CD8-positive, alpha-beta memory T cell (primary cell): ENCODE measurements at regions of chr15 and their contacts with region 1.

Region 1: DNA sequence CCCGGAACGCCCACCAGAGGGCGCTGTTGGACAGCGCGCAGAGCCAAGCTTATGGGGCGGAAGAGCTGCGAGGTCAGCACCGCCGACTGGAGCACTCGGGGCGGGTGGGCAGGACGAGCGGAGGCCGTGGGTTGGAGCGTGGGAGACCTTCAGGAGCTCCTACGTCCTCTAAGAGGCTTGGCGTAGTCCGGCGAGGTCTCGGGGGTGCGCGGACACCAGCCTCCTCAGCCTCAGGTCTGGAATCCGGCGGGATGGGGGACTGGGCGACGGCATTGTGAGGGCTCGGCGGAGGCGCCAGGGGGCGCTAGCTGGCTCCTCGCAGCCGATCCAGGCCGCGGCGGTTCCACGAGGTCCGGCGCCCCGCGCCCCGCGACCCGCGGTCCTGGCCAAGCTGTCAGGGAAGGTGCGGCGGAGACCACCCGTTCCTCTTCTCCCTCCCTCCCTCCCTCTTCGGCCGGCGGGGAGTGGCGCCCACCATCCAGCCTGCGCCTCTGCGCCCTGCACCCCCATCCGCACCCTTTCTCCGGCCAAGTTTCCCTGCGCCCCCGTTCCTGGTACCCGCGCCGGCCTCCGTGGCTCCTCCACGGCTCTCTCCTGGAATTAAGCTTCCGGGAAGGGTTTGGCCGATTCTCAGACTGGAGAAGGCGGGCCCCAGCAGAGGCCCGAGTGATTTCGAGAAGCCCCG is 24.3 kb upstream of the POLG start:
- DNase-seq: peak; percentile 65 to 84 (median 77)
- H3K4me3 ChIP-seq: peak overlapping the region; percentile 45
- H3K4me3 Mint-ChIP-seq: peak overlapping the region; percentile 70 to 89 (median 83)
- H3K27ac ChIP-seq: no peak overlapping the region
- H3K27ac Mint-ChIP-seq: peak overlapping the region in 2 of 8 donors; percentile 19 to 46
- H3K4me1 ChIP-seq: peaks cover 15% of the 10 kb centered on the region
- H3K4me1 Mint-ChIP-seq: peaks cover 10 to 35% (median 16%) of the 10 kb centered on the region in 3 donors
- H3K27me3 ChIP-seq: peaks cover 64% of the 10 kb centered on the region
- H3K27me3 Mint-ChIP-seq: peaks cover 74 to 79% of the 10 kb centered on the region in 2 donors

Region 2: DNA sequence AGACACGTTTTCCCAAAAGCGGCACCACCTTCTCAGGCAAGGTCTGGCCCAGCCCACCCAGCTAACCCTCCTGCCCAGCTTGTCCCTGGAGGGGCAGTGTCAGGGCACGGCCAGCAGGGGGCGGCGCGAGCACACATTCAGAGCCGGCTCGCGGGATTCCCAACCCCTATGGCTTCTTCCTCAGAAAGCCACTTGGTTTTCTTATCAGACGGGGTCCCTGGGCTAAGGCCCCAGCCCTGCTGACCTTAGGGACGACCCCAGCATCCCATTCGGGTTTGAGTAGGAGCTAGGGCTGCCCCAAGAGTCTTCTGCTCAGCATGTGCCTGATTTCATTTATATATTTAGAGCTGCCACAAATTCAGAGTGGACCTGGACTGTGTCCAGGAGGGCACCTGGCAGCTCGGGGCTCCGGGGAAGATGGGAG is 152.0 kb before region 1 on chr15:
- CTCF ChIA-PET with region 1: interaction called, 16 read pairs
- POLR2A ChIA-PET with region 1: no interaction called
- DNase-seq: peak; percentile 47 to 76 (median 57)
- H3K4me3 ChIP-seq: no peak overlapping the region
- H3K4me3 Mint-ChIP-seq: peak overlapping the region in 3 of 7 donors; percentile 1 to 28 (median 10)
- H3K27ac ChIP-seq: no peak overlapping the region
- H3K27ac Mint-ChIP-seq: peak overlapping the region in 2 of 8 donors; percentile 47 to 52
- H3K4me1 ChIP-seq: no peaks in the 10 kb centered on the region
- H3K4me1 Mint-ChIP-seq: peaks cover 30 to 36% (median 35%) of the 10 kb centered on the region in 3 donors
- H3K27me3 ChIP-seq: no peaks in the 10 kb centered on the region
- H3K27me3 Mint-ChIP-seq: peaks cover 0 to 4% of the 10 kb centered on the region in 2 donors

Region 3: DNA sequence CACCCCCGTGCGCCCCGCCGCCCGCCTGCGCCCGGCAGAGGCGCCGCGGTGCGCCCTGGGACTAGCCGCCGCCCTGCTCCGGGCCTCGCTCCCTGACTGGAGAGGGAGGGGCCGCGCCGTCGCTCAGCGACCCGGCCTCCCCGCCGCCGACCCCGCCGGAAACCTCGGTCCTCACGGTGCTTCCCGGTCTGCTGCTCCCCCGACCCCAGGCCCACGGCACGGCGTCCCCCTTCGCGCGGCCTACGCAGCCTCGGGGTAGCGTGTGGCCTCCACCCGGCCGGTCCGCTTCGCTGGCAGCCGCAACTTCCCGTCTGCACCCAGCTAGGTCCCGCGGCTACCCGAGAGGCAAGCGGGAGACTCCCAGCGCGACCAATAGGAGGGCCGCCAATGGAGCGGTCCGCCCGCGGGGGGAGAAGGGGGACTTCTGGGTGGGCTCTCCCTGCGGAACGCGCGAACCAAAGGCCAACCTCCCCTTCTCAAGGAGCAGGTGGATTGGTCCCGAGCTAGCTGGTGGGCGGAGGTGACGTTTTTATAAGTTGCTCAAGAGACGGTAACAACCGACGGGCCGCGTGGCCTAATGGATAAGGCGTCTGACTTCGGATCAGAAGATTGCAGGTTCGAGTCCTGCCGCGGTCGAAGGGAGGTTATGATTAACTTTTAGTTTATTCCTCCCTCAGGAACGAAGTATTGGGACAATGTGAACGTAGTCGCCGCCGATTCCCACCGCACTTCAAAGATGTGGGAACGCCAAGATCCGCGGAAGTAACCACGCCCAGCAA is 24.2 kb before region 1 on chr15 and contains the start of gene POLG:
- CTCF ChIA-PET with region 1: interaction called, 58 read pairs
- POLR2A ChIA-PET with region 1: no interaction called
- DNase-seq: peak; percentile 97 to 100 (median 99)
- H3K4me3 ChIP-seq: peak within 1 kb of the TSS; percentile 89
- H3K4me3 Mint-ChIP-seq: peak within 1 kb of the TSS; percentile 92 to 96 (median 94)
- H3K27ac ChIP-seq: peak within 1 kb of the TSS; percentile 82
- H3K27ac Mint-ChIP-seq: peak within 1 kb of the TSS; percentile 88 to 100 (median 97)
- H3K4me1 ChIP-seq: peaks cover 42% of the 10 kb centered on the region
- H3K4me1 Mint-ChIP-seq: peaks cover 50 to 55% (median 52%) of the 10 kb centered on the region in 3 donors
- H3K27me3 ChIP-seq: no peaks in the 10 kb centered on the region
- H3K27me3 Mint-ChIP-seq: peaks cover 4 to 10% of the 10 kb centered on the region in 2 donors
- total RNA-seq, gene POLG: 106 to 110 TPM

Region 4: GRCh38 chr15:89378296-89379151 is 19.6 kb after region 1 on chr15:
- CTCF ChIA-PET with region 1: interaction called, 32 read pairs
- POLR2A ChIA-PET with region 1: no interaction called
- DNase-seq: peak in 2 of 5 donors; percentile 30 to 48
- H3K4me3 ChIP-seq: peak overlapping the region; percentile 41
- H3K4me3 Mint-ChIP-seq: peak overlapping the region; percentile 68 to 91 (median 82)
- H3K27ac ChIP-seq: no peak overlapping the region
- H3K27ac Mint-ChIP-seq: peak overlapping the region in 5 of 8 donors; percentile 33 to 86 (median 68)
- H3K4me1 ChIP-seq: no peaks in the 10 kb centered on the region
- H3K4me1 Mint-ChIP-seq: peaks cover 7 to 42% (median 10%) of the 10 kb centered on the region in 3 donors
- H3K27me3 ChIP-seq: peaks cover 24% of the 10 kb centered on the region
- H3K27me3 Mint-ChIP-seq: peaks cover 48 to 56% of the 10 kb centered on the region in 2 donors

Region 5: DNA sequence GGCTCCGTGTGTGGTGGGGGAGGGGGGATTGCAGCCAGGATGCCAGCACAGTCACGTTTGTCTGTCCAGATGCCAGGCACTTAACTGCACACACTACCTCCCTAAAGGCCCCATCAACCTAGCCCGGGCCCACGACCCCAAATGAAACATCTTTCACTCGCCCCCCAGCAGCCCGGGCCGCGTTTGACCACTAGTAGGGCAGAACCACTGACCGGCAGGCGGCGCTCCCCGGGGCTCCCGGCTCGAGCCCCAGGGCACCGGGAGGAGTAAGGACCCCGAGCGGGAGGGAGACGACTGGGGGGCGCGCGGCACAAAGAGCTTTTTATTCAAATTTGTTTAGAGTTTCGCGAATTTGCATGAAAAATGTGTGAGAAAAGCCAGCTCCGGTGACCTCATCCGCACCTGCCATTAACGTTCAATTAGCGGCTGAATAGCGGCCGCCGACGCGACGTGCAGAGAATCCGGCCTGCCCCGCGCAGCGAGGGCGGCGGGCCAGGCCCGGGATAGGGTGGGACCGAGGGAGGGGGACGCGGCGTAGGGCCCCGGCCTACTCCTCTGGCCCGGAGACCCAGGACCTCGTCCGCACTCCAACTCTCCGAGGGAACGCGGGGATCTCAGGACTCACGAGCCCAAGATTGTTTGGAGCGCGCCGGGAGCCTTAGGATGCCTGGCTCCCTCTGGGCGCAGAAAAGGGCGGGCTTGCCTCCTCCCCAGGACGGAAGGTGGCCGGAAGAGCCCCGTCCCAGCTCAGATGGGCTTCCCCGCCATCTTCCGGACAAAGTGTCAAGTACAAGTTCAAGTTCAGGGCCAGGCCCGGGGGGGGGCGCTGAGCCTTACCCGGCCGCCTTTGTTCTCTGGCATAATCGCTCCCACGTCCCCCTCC is 40.6 kb after region 1 on chr15:
- CTCF ChIA-PET with region 1: interaction called, 40 read pairs
- POLR2A ChIA-PET with region 1: no interaction called
- DNase-seq: peak in 2 of 5 donors; percentile 28 to 55
- H3K4me3 ChIP-seq: peak overlapping the region; percentile 56
- H3K4me3 Mint-ChIP-seq: peak overlapping the region; percentile 78 to 93 (median 82)
- H3K27ac ChIP-seq: no peak overlapping the region
- H3K27ac Mint-ChIP-seq: no peak overlapping the region
- H3K4me1 ChIP-seq: no peaks in the 10 kb centered on the region
- H3K4me1 Mint-ChIP-seq: peaks cover 4 to 16% (median 9%) of the 10 kb centered on the region in 3 donors
- H3K27me3 ChIP-seq: peaks cover 45% of the 10 kb centered on the region
- H3K27me3 Mint-ChIP-seq: peaks cover 36 to 62% of the 10 kb centered on the region in 2 donors

Region 6: DNA sequence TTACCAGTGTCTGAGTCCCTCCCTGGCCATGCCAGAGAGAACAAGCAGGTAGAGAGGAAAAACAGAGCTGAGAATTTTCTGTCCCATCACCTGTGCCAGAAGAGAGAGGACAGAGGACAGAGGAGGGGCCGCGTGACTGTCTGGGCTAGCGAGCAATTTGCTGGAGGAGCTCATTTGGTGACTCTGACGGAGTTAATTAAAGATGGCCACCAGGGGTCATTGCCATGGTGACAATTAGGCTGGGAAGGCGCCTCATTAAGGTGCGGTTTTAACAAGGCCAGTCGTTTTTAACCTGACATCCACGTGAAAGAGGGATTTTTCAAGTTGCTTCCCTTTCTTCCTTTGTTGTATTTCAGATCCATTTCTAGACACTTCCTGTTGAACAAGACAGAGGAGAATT is 65.1 kb after region 1 on chr15:
- CTCF ChIA-PET with region 1: interaction called, 82 read pairs
- POLR2A ChIA-PET with region 1: interaction called, 3 read pairs
- DNase-seq: no peak
- H3K4me3 ChIP-seq: no peak overlapping the region
- H3K4me3 Mint-ChIP-seq: no peak overlapping the region
- H3K27ac ChIP-seq: no peak overlapping the region
- H3K27ac Mint-ChIP-seq: no peak overlapping the region
- H3K4me1 ChIP-seq: no peaks in the 10 kb centered on the region
- H3K4me1 Mint-ChIP-seq: no peaks in the 10 kb centered on the region
- H3K27me3 ChIP-seq: peaks cover 4% of the 10 kb centered on the region
- H3K27me3 Mint-ChIP-seq: peaks cover 19 to 53% of the 10 kb centered on the region in 2 donors

Region 7: DNA sequence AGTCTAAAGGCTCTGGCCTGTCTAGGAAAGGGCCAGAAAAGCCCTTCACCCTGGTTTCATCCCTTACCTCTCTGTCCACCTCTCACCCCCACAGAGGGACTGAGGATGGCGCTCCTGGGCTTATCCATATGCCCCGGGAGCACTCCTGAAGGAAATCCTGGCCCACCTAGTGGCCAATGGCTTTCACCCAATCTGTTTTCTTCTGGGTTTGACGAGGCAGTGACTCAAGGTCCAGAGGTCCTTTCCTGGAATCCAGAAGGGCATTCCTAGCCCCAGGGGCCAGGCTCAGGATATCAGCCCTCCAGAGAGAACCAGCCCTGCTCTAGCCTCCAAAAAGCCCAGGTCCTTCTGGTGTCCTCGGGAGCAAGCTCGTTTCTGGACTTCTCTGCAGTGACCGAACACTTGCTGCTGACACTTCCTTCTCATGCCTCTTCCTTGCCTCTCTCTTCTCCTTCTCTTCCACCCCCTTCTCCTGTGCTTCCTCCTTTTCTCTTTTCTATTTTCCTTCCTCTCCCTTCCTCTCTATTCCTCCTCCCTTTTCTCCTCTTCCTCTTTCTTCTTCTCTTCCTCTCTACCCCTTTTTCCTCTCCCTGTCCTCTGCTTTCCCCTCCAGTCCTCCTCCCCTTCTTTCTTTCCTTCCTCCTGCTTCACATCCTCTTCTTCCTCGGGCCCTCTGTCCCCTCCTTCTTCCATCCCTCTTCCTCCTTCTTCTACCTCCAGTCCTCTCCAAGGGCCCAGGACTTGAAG is 77.8 kb after region 1 on chr15:
- CTCF ChIA-PET with region 1: interaction called, 20 read pairs
- POLR2A ChIA-PET with region 1: no interaction called
- DNase-seq: no peak
- H3K4me3 ChIP-seq: no peak overlapping the region
- H3K4me3 Mint-ChIP-seq: no peak overlapping the region
- H3K27ac ChIP-seq: no peak overlapping the region
- H3K27ac Mint-ChIP-seq: no peak overlapping the region
- H3K4me1 ChIP-seq: no peaks in the 10 kb centered on the region
- H3K4me1 Mint-ChIP-seq: no peaks in the 10 kb centered on the region
- H3K27me3 ChIP-seq: peaks cover 3% of the 10 kb centered on the region
- H3K27me3 Mint-ChIP-seq: peaks cover 20 to 66% of the 10 kb centered on the region in 2 donors

Region 8: GRCh38 chr15:89457097-89457496 is 98.2 kb after region 1 on chr15:
- CTCF ChIA-PET with region 1: no interaction called
- POLR2A ChIA-PET with region 1: no interaction called
- DNase-seq: no peak
- H3K4me3 ChIP-seq: no peak overlapping the region
- H3K4me3 Mint-ChIP-seq: no peak overlapping the region
- H3K27ac ChIP-seq: no peak overlapping the region
- H3K27ac Mint-ChIP-seq: peak overlapping the region in 1 of 8 donors; percentile 5
- H3K4me1 ChIP-seq: no peaks in the 10 kb centered on the region
- H3K4me1 Mint-ChIP-seq: no peaks in the 10 kb centered on the region
- H3K27me3 ChIP-seq: no peaks in the 10 kb centered on the region
- H3K27me3 Mint-ChIP-seq: peaks cover 17 to 21% of the 10 kb centered on the region in 2 donors